ENCODE measurements at regions of chr9 and their contacts with region 1.

Region 1: GRCh38 chr9:137223078-137223970 is 1.3 kb upstream of the RNF208 start:
- DNase-seq: peak; percentile 99
- H3K4me3 ChIP-seq: peak overlapping the region; percentile 54 to 81 (median 63)
- H3K27ac ChIP-seq: peak overlapping the region; percentile 86 to 94 (median 90)
- H3K4me1 ChIP-seq: peaks cover 8 to 60% (median 34%) of the 10 kb centered on the region in 6 donors
- H3K27me3 ChIP-seq: peaks cover 0 to 33% (median 7%) of the 10 kb centered on the region in 7 donors
- CTCF ChIP-seq: peak in 1 of 11 experiments; percentile 22
- POLR2A ChIP-seq: peak in 2 of 3 donors; percentile 39 to 44

Region 2: GRCh38 chr9:137114610-137115391 is 108.5 kb before region 1 on chr9 and contains the start of gene DPP7:
- intact Hi-C with region 1: loop called (anchors 5 kb)
- DNase-seq: peak; percentile 96
- H3K4me3 ChIP-seq: peak within 1 kb of the TSS; percentile 64 to 94 (median 74)
- H3K27ac ChIP-seq: peak within 1 kb of the TSS in 6 of 8 donors; percentile 43 to 81 (median 74)
- H3K4me1 ChIP-seq: peaks cover 8 to 43% (median 22%) of the 10 kb centered on the region in 6 donors
- H3K27me3 ChIP-seq: no peaks in the 10 kb centered on the region
- CTCF ChIP-seq: peak in 1 of 11 experiments; percentile 9
- POLR2A ChIP-seq: no peak
- total RNA-seq, gene DPP7: 105 to 250 (median 166) TPM

Region 3: GRCh38 chr9:137194388-137194787 is 28.9 kb before region 1 on chr9:
- intact Hi-C with region 1: no loop called
- DNase-seq: no peak
- H3K4me3 ChIP-seq: no peak overlapping the region
- H3K27ac ChIP-seq: no peak overlapping the region
- H3K4me1 ChIP-seq: peaks cover 15 to 66% (median 39%) of the 10 kb centered on the region in 6 donors
- H3K27me3 ChIP-seq: peaks cover 0 to 4% (median 0%) of the 10 kb centered on the region in 7 donors
- CTCF ChIP-seq: no peak
- POLR2A ChIP-seq: no peak

Region 4: GRCh38 chr9:137205126-137206069 is 17.9 kb before region 1 on chr9 and contains the starts of genes NDOR1 and TMEM203:
- intact Hi-C with region 1: loop called (anchors 2 kb)
- DNase-seq: peak; percentile 98
- H3K4me3 ChIP-seq: peak within 1 kb of the TSS; percentile 79 to 99 (median 97)
- H3K27ac ChIP-seq: peak within 1 kb of the TSS; percentile 77 to 94 (median 88)
- H3K4me1 ChIP-seq: peaks cover 36 to 69% (median 62%) of the 10 kb centered on the region in 6 donors
- H3K27me3 ChIP-seq: no peaks in the 10 kb centered on the region
- CTCF ChIP-seq: no peak
- POLR2A ChIP-seq: peak in 1 of 3 donors; percentile 53
- total RNA-seq, gene NDOR1: 14.2 to 28.7 (median 21.6) TPM
- total RNA-seq, gene TMEM203: 28.4 to 37.9 (median 34.6) TPM

Region 5: GRCh38 chr9:137316012-137316976 is 93.0 kb after region 1 on chr9:
- intact Hi-C with region 1: no loop called
- DNase-seq: peak; percentile 79
- H3K4me3 ChIP-seq: peak overlapping the region in 6 of 8 donors; percentile 25 to 62 (median 30)
- H3K27ac ChIP-seq: peak overlapping the region in 2 of 8 donors; percentile 37 to 39
- H3K4me1 ChIP-seq: peaks cover 24 to 78% (median 50%) of the 10 kb centered on the region in 6 donors
- H3K27me3 ChIP-seq: peaks cover 0 to 33% (median 16%) of the 10 kb centered on the region in 7 donors
- CTCF ChIP-seq: no peak
- POLR2A ChIP-seq: no peak